Heart right ventricle (tissue), 16 donors: ENCODE measurements at regions of chr1 and their contacts with region 1.

Region 1: DNA sequence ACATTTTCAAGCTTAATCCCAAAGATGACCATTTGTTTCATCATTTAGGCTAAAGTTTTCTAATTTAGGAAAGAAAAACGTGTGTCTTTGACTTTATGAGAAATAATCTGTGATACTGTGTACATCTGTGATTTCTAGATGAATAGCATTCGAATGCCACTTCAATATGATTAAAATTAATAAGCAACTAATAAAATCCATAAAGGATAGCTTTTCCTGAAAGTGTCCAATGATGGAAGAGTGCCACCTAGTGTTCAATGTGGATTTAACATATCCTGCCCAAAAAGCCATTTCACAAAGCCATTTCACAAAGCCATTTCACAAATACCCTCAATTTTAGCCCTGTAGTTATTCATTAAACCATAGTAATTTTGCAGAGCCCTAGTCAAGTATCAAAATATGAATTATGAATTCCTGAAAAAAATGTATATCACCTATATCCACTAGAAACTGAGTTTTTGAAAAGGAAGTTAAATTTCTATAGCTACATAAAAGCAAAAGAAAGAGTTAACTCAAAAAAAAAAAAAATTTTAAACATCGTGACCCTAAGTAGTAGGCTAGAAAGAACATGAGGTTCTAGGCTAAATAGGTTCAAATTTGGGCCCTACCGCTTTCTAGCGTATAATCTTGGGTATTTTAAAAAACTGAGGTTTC is 19.1 kb downstream of the NME7 start:
- DNase-seq: peak in 1 of 2 donors; percentile 19
- ATAC-seq: no peak
- H3K4me3 ChIP-seq: no peak overlapping the region
- H3K27ac ChIP-seq: no peak overlapping the region
- H3K4me1 ChIP-seq: no peaks in the 10 kb centered on the region
- H3K27me3 ChIP-seq: no peaks in the 10 kb centered on the region
- CTCF ChIP-seq: peak; percentile 73 to 91 (median 81)

Region 2: GRCh38 chr1:168335500-168335899 is 1013.0 kb before region 1 on chr1:
- intact Hi-C with region 1: loop called in 8 of 10 experiments (anchors 5 to 10 kb)
- DNase-seq: no peak
- ATAC-seq: no peak
- H3K4me3 ChIP-seq: no peak overlapping the region
- H3K27ac ChIP-seq: no peak overlapping the region
- H3K4me1 ChIP-seq: peaks cover 0 to 2% (median 0%) of the 10 kb centered on the region in 9 donors
- H3K27me3 ChIP-seq: no peaks in the 10 kb centered on the region
- CTCF ChIP-seq: no peak

Region 3: DNA sequence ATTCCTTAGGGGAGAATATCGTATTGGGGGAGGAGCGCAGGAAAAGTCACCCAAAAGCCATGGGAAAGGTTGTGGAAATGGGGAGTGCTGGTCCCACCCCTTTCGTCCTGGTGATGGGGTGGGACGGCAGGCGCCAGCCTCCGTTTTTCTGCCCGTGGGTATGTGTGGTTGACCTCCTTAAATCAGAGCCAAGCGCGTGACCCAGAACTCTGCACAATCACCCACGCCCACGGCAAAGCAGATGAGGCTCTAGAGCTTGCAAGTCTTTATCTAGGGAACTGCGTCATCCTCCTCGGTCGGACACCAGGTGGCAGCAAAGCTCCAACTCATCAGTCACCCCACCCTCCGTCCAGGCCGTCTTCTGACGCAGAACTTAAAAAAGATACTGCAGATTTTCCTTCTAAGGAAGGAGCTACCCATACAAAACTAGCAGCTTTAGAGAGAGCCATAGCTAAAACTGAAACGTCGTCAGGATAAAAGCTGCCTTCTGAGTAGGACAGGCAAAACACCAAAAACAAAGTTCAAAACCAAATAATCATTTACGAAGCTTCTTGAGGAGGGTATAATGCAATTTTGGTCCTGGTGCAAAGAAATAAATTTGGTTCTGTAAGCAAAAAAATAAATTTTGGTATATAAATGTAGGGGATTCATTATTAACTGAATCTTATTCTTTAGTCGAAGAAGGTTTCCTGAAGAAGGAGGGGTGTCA is 1005.8 kb before region 1 on chr1:
- intact Hi-C with region 1: loop called in 8 of 10 experiments (anchors 5 to 10 kb)
- DNase-seq: peak; percentile 86 to 90
- ATAC-seq: peak; percentile 96 to 98 (median 98)
- H3K4me3 ChIP-seq: peak overlapping the region in 6 of 10 donors; percentile 30 to 37 (median 36)
- H3K27ac ChIP-seq: peak overlapping the region in 6 of 10 donors; percentile 24 to 66 (median 58)
- H3K4me1 ChIP-seq: peaks cover 0 to 33% (median 11%) of the 10 kb centered on the region in 9 donors
- H3K27me3 ChIP-seq: no peaks in the 10 kb centered on the region
- CTCF ChIP-seq: peak; percentile 68 to 90 (median 85)

Region 4: DNA sequence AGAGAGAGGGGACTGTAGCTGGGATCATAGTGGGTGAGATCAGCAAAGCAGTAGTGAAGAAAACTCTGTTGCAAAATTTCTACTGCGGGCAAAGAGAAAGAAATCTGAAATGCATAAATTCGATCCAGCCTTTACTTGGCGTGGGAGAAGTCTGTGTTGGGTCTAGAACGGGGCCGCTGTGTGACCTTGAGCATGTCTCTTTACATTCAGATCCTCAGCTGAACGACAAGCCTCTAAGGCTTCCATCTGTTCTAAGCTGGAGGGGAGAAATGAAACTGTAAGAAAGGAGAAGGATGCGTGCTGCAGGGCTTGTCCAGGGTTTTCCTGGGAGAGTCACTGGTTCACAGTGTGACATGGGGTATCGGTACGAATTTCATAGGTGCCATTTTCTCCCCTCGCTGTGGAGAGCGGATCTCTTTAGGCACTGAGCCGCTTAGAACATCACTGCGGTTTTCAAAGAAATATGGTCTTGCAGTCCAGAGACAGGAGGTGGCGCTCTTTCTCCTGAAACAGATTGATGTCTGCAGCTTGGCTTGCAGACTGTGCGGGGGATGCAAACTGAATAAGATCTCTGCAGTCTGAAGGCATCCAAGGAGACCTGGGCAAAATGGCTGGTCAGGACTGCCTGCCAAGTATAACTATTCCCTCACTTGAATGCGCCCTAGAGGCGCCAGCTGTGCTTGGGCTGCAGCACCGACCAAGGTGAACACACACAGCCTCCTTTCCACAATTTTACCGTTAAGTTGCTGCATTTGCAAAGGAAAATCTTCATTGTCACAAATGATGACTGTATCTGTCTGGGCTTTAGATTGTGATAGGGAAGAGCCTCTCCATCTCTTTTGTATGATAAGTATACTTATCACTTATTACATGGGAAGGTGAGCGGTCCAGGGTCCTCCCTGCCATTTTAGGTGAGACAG is 908.8 kb before region 1 on chr1:
- intact Hi-C with region 1: loop called in 7 of 10 experiments (anchors 2 to 10 kb)
- DNase-seq: peak; percentile 27 to 79
- ATAC-seq: peak; percentile 80 to 92 (median 90)
- H3K4me3 ChIP-seq: peak overlapping the region in 8 of 10 donors; percentile 5 to 38 (median 28)
- H3K27ac ChIP-seq: peak overlapping the region in 1 of 10 donors; percentile 54
- H3K4me1 ChIP-seq: peaks cover 0 to 13% (median 4%) of the 10 kb centered on the region in 9 donors
- H3K27me3 ChIP-seq: no peaks in the 10 kb centered on the region
- CTCF ChIP-seq: peak; percentile 36 to 85 (median 78)

Region 5: GRCh38 chr1:168603501-168604110 is 744.9 kb before region 1 on chr1:
- intact Hi-C with region 1: loop called (anchors 1 to 5 kb)
- DNase-seq: peak; percentile 78
- ATAC-seq: peak; percentile 82 to 93 (median 88)
- H3K4me3 ChIP-seq: no peak overlapping the region
- H3K27ac ChIP-seq: no peak overlapping the region
- H3K4me1 ChIP-seq: peaks cover 0 to 15% (median under 1%) of the 10 kb centered on the region in 9 donors
- H3K27me3 ChIP-seq: no peaks in the 10 kb centered on the region
- CTCF ChIP-seq: peak; percentile 65 to 93 (median 88)

Region 6: GRCh38 chr1:168609133-168609715 is 739.3 kb before region 1 on chr1:
- intact Hi-C with region 1: loop called in 5 of 10 experiments (anchors 1 to 5 kb)
- DNase-seq: peak; percentile 27 to 50
- ATAC-seq: peak; percentile 39 to 70 (median 64)
- H3K4me3 ChIP-seq: peak overlapping the region in 1 of 10 donors; percentile 9
- H3K27ac ChIP-seq: peak overlapping the region in 7 of 10 donors; percentile 37 to 64 (median 44)
- H3K4me1 ChIP-seq: peaks cover 3 to 34% (median 23%) of the 10 kb centered on the region in 9 donors
- H3K27me3 ChIP-seq: no peaks in the 10 kb centered on the region
- CTCF ChIP-seq: no peak

Region 7: DNA sequence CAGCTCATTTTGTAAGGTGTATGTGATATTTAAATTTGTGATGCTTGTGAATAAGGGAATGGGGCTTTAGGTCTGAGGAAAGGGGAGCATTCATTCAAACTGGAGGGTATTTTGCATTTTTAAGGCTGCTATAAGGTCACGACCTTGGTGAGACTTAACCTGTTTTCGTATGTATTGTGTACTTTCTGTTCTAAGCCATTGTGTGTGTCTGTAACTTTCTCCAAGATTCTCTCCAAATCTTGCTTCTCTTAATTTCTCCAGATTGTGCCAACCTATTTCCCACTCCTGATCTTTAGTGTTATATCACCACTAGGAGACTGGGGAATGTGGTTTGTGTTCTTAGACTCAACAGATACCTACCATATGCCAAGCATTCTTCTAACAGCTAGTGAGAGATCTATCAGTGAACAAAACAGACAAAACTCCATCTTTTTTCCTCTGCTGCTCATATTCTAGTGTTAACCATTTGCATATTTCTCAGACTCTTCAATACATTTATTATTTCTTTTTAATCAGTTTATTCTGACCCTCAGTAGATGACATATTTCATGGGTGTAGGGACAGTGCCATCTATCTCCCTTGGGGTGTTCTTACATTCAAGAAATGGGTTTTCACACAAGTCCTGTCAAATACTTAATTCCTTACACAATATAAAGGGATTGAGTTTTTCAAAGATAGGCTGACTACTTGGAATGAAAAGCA is 214.6 kb before region 1 on chr1:
- intact Hi-C with region 1: loop called in 3 of 10 experiments (anchors 10 kb)
- DNase-seq: no peak
- ATAC-seq: peak in 3 of 8 donors; percentile 45 to 57 (median 52)
- H3K4me3 ChIP-seq: no peak overlapping the region
- H3K27ac ChIP-seq: peak overlapping the region in 1 of 10 donors; percentile 10
- H3K4me1 ChIP-seq: peaks cover 0 to 44% (median 11%) of the 10 kb centered on the region in 9 donors
- H3K27me3 ChIP-seq: no peaks in the 10 kb centered on the region
- CTCF ChIP-seq: peak in 6 of 9 donors; percentile 21 to 58 (median 42)